A673 (cell line): ENCODE measurements at regions of chr1 and their contacts with region 1.

Region 1: DNA sequence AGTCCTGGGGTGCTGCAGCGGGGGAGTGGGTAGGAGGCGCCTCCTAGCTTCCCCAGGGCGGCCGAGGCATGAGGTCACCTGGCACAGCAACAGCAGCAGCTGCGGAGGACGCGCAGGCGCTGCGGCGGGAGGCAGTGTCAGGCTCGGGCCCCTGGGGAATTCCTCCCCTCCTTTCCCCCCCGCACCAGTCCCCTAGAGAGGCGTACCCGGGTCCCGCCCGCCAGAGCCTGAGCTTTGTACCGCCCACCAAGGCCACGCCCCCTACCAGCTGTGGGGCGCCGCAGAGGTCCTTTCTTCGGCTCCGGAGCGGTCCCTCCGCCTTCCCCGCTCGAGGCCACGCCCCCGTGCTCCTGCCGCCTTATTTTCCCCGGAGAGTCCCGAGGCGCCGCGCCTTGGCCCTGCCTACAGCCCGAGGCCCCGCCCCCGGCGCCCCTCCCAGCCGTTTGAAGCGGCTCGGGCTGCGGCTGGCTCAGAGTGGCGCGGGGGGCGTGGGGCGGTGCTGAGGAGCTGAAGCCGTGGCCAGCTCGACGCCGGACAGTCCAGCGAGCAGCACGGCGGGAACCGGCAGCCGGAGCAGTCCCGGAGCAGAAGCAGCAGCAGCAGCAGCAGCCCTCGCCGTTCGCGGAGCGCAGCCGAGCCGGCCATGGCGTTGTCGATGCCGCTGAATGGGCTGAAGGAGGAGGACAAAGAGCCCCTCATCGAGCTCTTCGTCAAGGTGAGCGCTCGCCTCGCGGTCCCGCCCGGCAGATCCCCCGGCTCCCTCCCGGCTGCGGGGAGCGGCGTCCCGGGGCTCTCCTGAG is at the start of gene CLIC4:
- DNase-seq: peak; percentile 99
- H3K4me3 ChIP-seq: peak within 1 kb of the TSS; percentile 99
- H3K27ac ChIP-seq: peak within 1 kb of the TSS; percentile 96
- H3K4me1 ChIP-seq: peaks cover 42% of the 10 kb centered on the region
- H3K27me3 ChIP-seq: no peaks in the 10 kb centered on the region
- CTCF ChIP-seq: no peak
- total RNA-seq, gene CLIC4: 207 and 209 TPM in 2 replicates

Region 2: GRCh38 chr1:24673336-24673735 is 71.8 kb before region 1 on chr1:
- CTCF ChIA-PET with region 1: no interaction called
- POLR2A ChIA-PET with region 1: interaction called, 11 read pairs
- intact Hi-C with region 1: no loop called
- DNase-seq: no peak
- H3K4me3 ChIP-seq: no peak overlapping the region
- H3K27ac ChIP-seq: no peak overlapping the region
- H3K4me1 ChIP-seq: no peaks in the 10 kb centered on the region
- H3K27me3 ChIP-seq: no peaks in the 10 kb centered on the region
- CTCF ChIP-seq: no peak

Region 3: GRCh38 chr1:24694380-24694843 is 50.7 kb before region 1 on chr1:
- CTCF ChIA-PET with region 1: interaction called, 4 read pairs
- POLR2A ChIA-PET with region 1: no interaction called
- intact Hi-C with region 1: loop called (anchors 5 kb)
- DNase-seq: peak; percentile 81
- H3K4me3 ChIP-seq: no peak overlapping the region
- H3K27ac ChIP-seq: no peak overlapping the region
- H3K4me1 ChIP-seq: peaks cover 19% of the 10 kb centered on the region
- H3K27me3 ChIP-seq: no peaks in the 10 kb centered on the region
- CTCF ChIP-seq: no peak

Region 4: GRCh38 chr1:24727501-24728216 is 17.5 kb before region 1 on chr1:
- CTCF ChIA-PET with region 1: no interaction called
- POLR2A ChIA-PET with region 1: no interaction called
- intact Hi-C with region 1: no loop called
- DNase-seq: peak; percentile 68
- H3K4me3 ChIP-seq: no peak overlapping the region
- H3K27ac ChIP-seq: no peak overlapping the region
- H3K4me1 ChIP-seq: peaks cover 12% of the 10 kb centered on the region
- H3K27me3 ChIP-seq: no peaks in the 10 kb centered on the region
- CTCF ChIP-seq: no peak

Region 5: GRCh38 chr1:24762133-24762676 is 17.1 kb after region 1 on chr1:
- CTCF ChIA-PET with region 1: interaction called, 4 read pairs
- POLR2A ChIA-PET with region 1: interaction called, 14 read pairs
- intact Hi-C with region 1: no loop called
- DNase-seq: no peak
- H3K4me3 ChIP-seq: no peak overlapping the region
- H3K27ac ChIP-seq: peak overlapping the region; percentile 29
- H3K4me1 ChIP-seq: peaks cover 42% of the 10 kb centered on the region
- H3K27me3 ChIP-seq: no peaks in the 10 kb centered on the region
- CTCF ChIP-seq: no peak

Region 6: GRCh38 chr1:24775916-24776315 is 30.8 kb after region 1 on chr1:
- CTCF ChIA-PET with region 1: no interaction called
- POLR2A ChIA-PET with region 1: no interaction called
- intact Hi-C with region 1: no loop called
- DNase-seq: no peak
- H3K4me3 ChIP-seq: no peak overlapping the region
- H3K27ac ChIP-seq: no peak overlapping the region
- H3K4me1 ChIP-seq: peaks cover 58% of the 10 kb centered on the region
- H3K27me3 ChIP-seq: no peaks in the 10 kb centered on the region
- CTCF ChIP-seq: no peak